CD4-positive, alpha-beta memory T cell (primary cell): ENCODE measurements at regions of chr3 and their contacts with region 1.

Region 1: GRCh38 chr3:172522871-172523818 is at the start of gene TNFSF10:
- DNase-seq: peak; percentile 68 to 82 (median 73)
- H3K4me3 ChIP-seq: peak within 1 kb of the TSS; percentile 96 to 98
- H3K4me3 Mint-ChIP-seq: peak within 1 kb of the TSS; percentile 94 to 100 (median 96)
- H3K27ac ChIP-seq: peak within 1 kb of the TSS; percentile 79
- H3K27ac Mint-ChIP-seq: peak within 1 kb of the TSS; percentile 91 to 97 (median 96)
- H3K4me1 ChIP-seq: peaks cover 41% of the 10 kb centered on the region
- H3K4me1 Mint-ChIP-seq: peaks cover 34 to 67% (median 43%) of the 10 kb centered on the region in 4 donors
- H3K27me3 ChIP-seq: no peaks in the 10 kb centered on the region
- H3K27me3 Mint-ChIP-seq: no peaks in the 10 kb centered on the region
- total RNA-seq, gene TNFSF10: 63.4 to 65.6 TPM

Region 2: DNA sequence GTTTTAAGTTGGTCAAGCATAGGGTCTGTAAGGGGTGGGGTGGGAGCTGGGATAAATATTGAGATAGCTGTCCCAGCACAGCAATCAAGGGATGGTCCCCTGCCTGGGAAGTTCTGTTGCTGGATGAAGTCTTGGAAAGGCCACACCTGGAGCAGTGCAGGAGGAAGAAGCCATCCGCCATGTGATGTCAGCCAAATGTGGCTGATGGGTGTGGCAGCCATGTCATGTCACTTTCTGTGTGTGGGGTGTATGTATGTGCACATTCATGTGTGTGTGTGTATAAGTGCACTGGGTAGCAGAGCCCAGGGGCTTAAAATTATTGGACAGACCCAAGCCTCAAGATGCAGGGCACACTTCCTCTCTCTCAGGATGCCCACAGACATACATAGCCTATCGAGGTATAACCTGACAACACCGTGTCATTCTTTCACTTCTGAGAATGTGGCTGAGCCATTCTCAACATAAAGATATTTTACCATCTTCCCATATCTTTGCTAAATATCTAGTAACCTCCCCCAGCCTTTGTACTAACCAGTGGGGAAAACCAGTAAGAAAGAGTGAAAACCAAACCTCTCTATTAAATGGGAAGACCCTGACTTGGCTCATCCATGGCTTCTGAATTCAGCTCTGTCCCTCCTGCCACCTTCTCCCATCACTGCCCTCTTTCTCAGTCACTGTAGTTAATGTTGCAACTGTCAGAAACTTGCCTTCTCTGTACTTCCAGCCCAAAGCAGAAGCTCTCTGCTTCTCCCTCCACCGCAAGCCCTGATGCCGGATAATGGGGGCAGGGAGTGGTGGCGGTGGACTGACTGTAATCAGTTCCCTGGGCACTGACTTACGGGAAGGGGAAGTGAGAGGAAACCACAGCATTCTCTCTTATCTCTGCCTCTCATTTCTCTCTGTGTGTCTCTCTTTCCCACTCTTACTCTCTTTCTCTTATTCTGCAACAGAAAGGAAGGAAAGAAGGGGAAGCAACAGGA is 11.1 kb before region 1 on chr3:
- CTCF ChIA-PET with region 1: interaction called, 5 read pairs
- POLR2A ChIA-PET with region 1: interaction called, 74 read pairs
- intact Hi-C with region 1: loop called (anchors 1 kb)
- DNase-seq: peak; percentile 46 to 76 (median 58)
- H3K4me3 ChIP-seq: peak overlapping the region in 1 of 2 donors; percentile 22
- H3K4me3 Mint-ChIP-seq: peak overlapping the region; percentile 61 to 91 (median 82)
- H3K27ac ChIP-seq: peak overlapping the region; percentile 50
- H3K27ac Mint-ChIP-seq: peak overlapping the region; percentile 91 to 98 (median 95)
- H3K4me1 ChIP-seq: peaks cover 73% of the 10 kb centered on the region
- H3K4me1 Mint-ChIP-seq: peaks cover 59 to 90% (median 74%) of the 10 kb centered on the region in 4 donors
- H3K27me3 ChIP-seq: no peaks in the 10 kb centered on the region
- H3K27me3 Mint-ChIP-seq: no peaks in the 10 kb centered on the region

Region 3: GRCh38 chr3:172536993-172537419 is 13.9 kb after region 1 on chr3:
- CTCF ChIA-PET with region 1: interaction called, 5 read pairs
- POLR2A ChIA-PET with region 1: interaction called, 44 read pairs
- intact Hi-C with region 1: loop called (anchors 2 kb)
- DNase-seq: no peak
- H3K4me3 ChIP-seq: no peak overlapping the region
- H3K4me3 Mint-ChIP-seq: peak overlapping the region in 7 of 8 donors; percentile 4 to 84 (median 65)
- H3K27ac ChIP-seq: peak overlapping the region; percentile 3
- H3K27ac Mint-ChIP-seq: peak overlapping the region; percentile 62 to 93 (median 88)
- H3K4me1 ChIP-seq: peaks cover 31% of the 10 kb centered on the region
- H3K4me1 Mint-ChIP-seq: peaks cover 28 to 46% (median 37%) of the 10 kb centered on the region in 4 donors
- H3K27me3 ChIP-seq: no peaks in the 10 kb centered on the region
- H3K27me3 Mint-ChIP-seq: no peaks in the 10 kb centered on the region

Region 4: GRCh38 chr3:172562871-172563863 is 40.0 kb after region 1 on chr3:
- CTCF ChIA-PET with region 1: interaction called, 3 read pairs
- POLR2A ChIA-PET with region 1: interaction called, 41 read pairs
- intact Hi-C with region 1: loop called (anchors 1 kb)
- DNase-seq: peak; percentile 17 to 58 (median 41)
- H3K4me3 ChIP-seq: no peak overlapping the region
- H3K4me3 Mint-ChIP-seq: peak overlapping the region; percentile 74 to 92 (median 90)
- H3K27ac ChIP-seq: peak overlapping the region; percentile 38
- H3K27ac Mint-ChIP-seq: peak overlapping the region; percentile 82 to 98 (median 95)
- H3K4me1 ChIP-seq: peaks cover 27% of the 10 kb centered on the region
- H3K4me1 Mint-ChIP-seq: peaks cover 22 to 30% (median 27%) of the 10 kb centered on the region in 4 donors
- H3K27me3 ChIP-seq: no peaks in the 10 kb centered on the region
- H3K27me3 Mint-ChIP-seq: peaks cover 0 to 1% of the 10 kb centered on the region in 2 donors

Region 5: DNA sequence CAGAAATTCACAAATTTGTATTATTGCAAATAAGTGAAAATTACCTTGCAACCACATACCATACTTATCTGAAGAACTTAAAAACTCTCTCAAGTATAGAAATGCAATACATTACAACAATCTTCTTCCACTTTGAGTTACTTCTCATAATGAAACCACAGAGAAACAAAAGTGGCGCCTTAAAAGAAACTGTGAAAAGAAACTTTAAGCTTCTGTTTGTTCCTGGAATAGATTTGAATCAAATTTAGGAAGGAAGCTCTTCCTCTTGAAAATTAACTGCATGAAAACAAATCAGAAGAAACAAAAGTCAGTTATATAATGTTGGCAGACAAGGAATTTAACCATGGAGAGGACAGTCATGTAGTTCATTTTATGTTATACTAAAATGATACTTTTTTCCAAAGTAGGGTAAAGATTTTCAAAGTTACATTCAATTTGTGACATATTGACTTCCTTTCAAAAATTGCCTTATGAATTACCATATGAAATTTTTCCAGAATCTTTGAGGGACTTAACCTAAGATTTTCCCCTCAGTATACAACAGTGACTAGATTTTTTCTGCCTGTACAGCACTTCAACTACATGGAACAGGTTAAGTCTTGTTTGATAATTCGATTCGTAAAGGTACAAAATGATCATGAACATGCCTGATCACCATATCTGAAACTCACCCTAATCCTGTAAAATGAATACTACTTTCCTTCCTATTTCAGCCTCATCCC is 57.7 kb after region 1 on chr3:
- CTCF ChIA-PET with region 1: no interaction called
- POLR2A ChIA-PET with region 1: interaction called, 12 read pairs
- intact Hi-C with region 1: loop called (anchors 5 kb)
- DNase-seq: no peak
- H3K4me3 ChIP-seq: no peak overlapping the region
- H3K4me3 Mint-ChIP-seq: peak overlapping the region; percentile 47 to 87 (median 74)
- H3K27ac ChIP-seq: peak overlapping the region; percentile 44
- H3K27ac Mint-ChIP-seq: peak overlapping the region; percentile 73 to 95 (median 89)
- H3K4me1 ChIP-seq: peaks cover 74% of the 10 kb centered on the region
- H3K4me1 Mint-ChIP-seq: peaks cover 59 to 88% (median 79%) of the 10 kb centered on the region in 4 donors
- H3K27me3 ChIP-seq: no peaks in the 10 kb centered on the region
- H3K27me3 Mint-ChIP-seq: no peaks in the 10 kb centered on the region